Prostate gland (tissue), 2 donors: ENCODE measurements at regions of chr7 and their contacts with region 1.

Region 1: DNA sequence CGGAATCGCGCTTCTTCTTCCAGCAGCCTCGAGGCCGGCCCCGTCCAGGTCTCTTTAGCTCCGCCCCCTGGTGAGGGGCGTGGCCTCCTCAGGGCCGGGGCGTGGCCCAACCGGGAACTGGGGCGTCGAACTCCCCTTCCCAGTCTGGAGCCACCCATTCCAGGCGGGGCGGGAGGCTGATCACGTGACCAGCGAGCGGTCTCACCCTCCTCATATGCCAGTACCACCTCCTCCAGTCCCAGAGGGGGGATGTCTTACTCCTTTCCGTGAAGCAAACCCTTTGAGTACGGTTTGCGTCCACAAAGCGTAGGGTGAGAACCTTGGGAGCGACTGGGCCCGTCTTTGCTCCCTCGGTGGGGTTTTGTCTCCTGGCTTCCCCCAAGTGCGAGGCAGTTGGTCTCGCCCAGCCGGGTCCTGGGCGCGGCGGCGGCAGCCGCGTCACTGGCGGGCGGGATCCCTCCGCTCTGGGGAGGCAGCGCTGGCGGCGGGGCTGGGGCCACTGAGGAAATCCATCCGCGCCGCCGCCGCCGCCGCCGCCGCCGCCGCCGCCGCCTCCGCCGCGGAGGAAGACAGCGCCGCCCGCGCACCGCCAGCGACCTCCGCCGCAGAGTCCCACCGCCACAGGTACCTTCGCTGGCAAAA is at the start of gene GNB2:
- DNase-seq: peak; percentile 99
- H3K4me3 ChIP-seq: peak within 1 kb of the TSS; percentile 98 to 99
- H3K27ac ChIP-seq: peak within 1 kb of the TSS; percentile 99
- H3K4me1 ChIP-seq: peaks cover 4% of the 10 kb centered on the region
- H3K27me3 ChIP-seq: no peaks in the 10 kb centered on the region
- CTCF ChIP-seq: peak in 2 of 4 experiments; percentile 13 to 17
- POLR2A ChIP-seq: peak; percentile 88
- total RNA-seq, gene GNB2: 376 to 417 TPM

Region 2: DNA sequence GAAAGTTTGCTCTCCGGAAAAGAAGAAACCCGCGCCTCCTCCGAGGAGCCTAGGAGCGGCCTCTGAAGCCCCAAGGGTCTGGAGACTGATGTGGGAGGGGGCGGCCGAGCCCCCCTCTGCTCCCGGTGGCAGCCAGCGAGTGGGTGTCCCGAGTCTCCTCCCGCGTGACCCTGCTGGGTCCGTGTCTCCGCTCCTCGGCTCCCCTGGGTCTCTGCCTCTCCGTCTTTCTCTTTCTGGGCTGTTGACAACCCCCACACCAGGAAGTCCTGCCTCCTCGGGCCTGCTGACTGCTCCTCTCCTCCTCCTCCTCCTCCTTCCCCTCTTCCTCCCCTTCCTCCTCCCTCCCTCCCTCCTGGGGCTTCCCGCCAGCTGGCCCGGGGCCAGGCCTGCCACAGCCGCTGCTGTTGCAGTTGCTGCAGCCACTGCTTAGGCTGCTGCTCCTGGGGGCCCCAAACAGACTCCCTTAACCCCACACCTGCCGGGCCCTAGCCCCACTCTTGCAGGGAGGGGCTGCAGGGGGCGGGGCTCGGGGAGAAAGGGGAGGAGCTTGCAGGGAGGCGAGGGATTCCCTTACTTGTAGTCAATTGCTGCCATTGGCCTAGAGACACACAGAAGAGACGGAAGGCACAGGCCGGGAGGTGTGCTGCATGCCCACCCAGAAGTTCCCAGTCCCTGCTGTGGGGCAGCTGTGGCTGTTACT is 194.3 kb before region 1 on chr7 and contains the start of gene TSC22D4:
- intact Hi-C with region 1: loop called (anchors 10 kb)
- DNase-seq: peak; percentile 95
- H3K4me3 ChIP-seq: peak within 1 kb of the TSS; percentile 84 to 100
- H3K27ac ChIP-seq: peak within 1 kb of the TSS; percentile 94 to 98
- H3K4me1 ChIP-seq: peaks cover 30% of the 10 kb centered on the region
- H3K27me3 ChIP-seq: no peaks in the 10 kb centered on the region
- CTCF ChIP-seq: peak in 1 of 4 experiments; percentile 14
- POLR2A ChIP-seq: peak; percentile 97
- total RNA-seq, gene TSC22D4: 77.6 to 152 TPM

Region 3: DNA sequence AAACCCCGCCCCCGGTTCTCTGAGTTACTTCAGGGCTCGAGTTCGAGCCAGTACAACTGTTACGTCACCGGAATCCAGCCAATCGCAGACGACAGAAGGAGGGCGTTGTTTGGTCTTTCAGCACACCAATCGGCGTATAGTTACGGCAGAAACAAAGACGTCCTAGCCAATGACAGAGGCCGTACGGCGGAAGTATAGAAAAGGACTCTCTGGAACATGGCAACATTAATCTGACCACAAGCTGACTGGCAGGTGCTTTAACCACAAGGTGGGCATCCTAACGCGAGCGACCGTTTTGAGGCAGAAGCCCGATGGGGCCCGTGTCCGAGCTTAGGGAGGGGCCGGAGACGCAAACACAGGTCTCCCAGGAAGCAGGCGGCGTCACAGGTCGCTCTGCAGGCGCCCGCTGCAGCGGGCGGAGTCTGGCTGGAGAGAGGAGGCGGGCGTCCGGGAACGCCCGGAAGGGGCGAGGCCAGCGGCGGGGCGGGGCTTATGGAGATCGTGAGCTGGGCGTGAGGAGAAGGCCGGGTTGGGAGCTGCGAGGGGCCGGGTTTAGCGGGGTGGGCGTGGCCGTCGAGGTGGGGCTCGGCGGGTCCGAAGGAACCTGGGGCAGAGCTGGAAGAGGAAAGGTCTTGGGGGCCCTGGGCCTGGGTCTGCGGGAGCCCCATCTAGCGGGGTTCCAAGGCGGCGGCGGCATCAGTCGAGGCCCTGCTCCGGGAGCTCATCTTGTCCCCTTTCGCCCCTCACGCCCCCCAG is 61.3 kb before region 1 on chr7 and contains the start of gene MOSPD3:
- intact Hi-C with region 1: loop called (anchors 2 kb)
- DNase-seq: peak; percentile 99
- H3K4me3 ChIP-seq: peak within 1 kb of the TSS; percentile 63 to 69
- H3K27ac ChIP-seq: peak within 1 kb of the TSS; percentile 96 to 97
- H3K4me1 ChIP-seq: peaks cover 5% of the 10 kb centered on the region
- H3K27me3 ChIP-seq: no peaks in the 10 kb centered on the region
- CTCF ChIP-seq: peak in 2 of 4 experiments; percentile 28 to 42
- POLR2A ChIP-seq: peak; percentile 72
- total RNA-seq, gene MOSPD3: 20.1 to 36.1 TPM